ENCODE measurements at regions of chr11 and their contacts with region 1.

Region 1: GRCh38 chr11:102341844-102342318 is 5.1 kb upstream of the BIRC2 start:
- DNase-seq: peak; percentile 64 to 78 (median 70)
- H3K4me3 ChIP-seq: no peak overlapping the region
- H3K4me3 Mint-ChIP-seq: no peak overlapping the region
- H3K27ac ChIP-seq: peak overlapping the region; percentile 1
- H3K27ac Mint-ChIP-seq: peak overlapping the region; percentile 53 to 93 (median 77)
- H3K4me1 ChIP-seq: peaks cover 14% of the 10 kb centered on the region
- H3K4me1 Mint-ChIP-seq: peaks cover 19 to 24% (median 23%) of the 10 kb centered on the region in 4 donors
- H3K27me3 ChIP-seq: no peaks in the 10 kb centered on the region
- H3K27me3 Mint-ChIP-seq: peaks cover 0 to 1% of the 10 kb centered on the region in 2 donors

Region 2: GRCh38 chr11:102109896-102110760 is 231.8 kb before region 1 on chr11 and contains the start of gene YAP1:
- CTCF ChIA-PET with region 1: no interaction called
- POLR2A ChIA-PET with region 1: no interaction called
- intact Hi-C with region 1: no loop called
- DNase-seq: peak; percentile 58 to 69 (median 61)
- H3K4me3 ChIP-seq: peak within 1 kb of the TSS in 1 of 2 donors; percentile 55
- H3K4me3 Mint-ChIP-seq: peak within 1 kb of the TSS; percentile 92 to 97 (median 94)
- H3K27ac ChIP-seq: no peak within 1 kb of the TSS
- H3K27ac Mint-ChIP-seq: peak within 1 kb of the TSS in 6 of 7 donors; percentile 23 to 82 (median 75)
- H3K4me1 ChIP-seq: peaks cover 12% of the 10 kb centered on the region
- H3K4me1 Mint-ChIP-seq: peaks cover 5 to 12% (median 8%) of the 10 kb centered on the region in 4 donors
- H3K27me3 ChIP-seq: peaks cover 11% of the 10 kb centered on the region
- H3K27me3 Mint-ChIP-seq: peaks cover 24 to 30% of the 10 kb centered on the region in 2 donors
- total RNA-seq, gene YAP1: 0.44 to 0.75 TPM

Region 3: DNA sequence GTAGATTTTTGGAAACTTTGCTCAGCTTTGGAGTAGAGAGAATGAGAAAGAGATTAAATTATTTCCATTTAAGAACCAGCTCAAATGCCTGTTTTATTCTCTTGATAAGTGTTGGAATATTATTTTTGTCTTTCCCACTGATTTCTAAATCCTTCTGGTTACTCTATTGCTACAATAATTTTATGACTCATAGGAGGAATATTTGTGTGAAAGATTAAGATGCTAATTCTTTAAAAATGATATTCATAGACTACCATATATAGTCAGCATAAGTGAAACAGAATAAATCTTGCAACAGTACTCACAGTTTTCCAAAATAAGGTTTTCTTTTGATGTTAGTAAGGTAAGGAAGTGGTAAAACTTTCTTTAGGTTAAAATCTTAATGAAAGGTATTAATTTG is 170.8 kb before region 1 on chr11:
- CTCF ChIA-PET with region 1: no interaction called
- POLR2A ChIA-PET with region 1: no interaction called
- intact Hi-C with region 1: no loop called
- DNase-seq: no peak
- H3K4me3 ChIP-seq: no peak overlapping the region
- H3K4me3 Mint-ChIP-seq: no peak overlapping the region
- H3K27ac ChIP-seq: no peak overlapping the region
- H3K27ac Mint-ChIP-seq: no peak overlapping the region
- H3K4me1 ChIP-seq: no peaks in the 10 kb centered on the region
- H3K4me1 Mint-ChIP-seq: no peaks in the 10 kb centered on the region
- H3K27me3 ChIP-seq: no peaks in the 10 kb centered on the region
- H3K27me3 Mint-ChIP-seq: peaks cover 11 to 22% of the 10 kb centered on the region in 2 donors

Region 4: GRCh38 chr11:102293873-102294601 is 47.8 kb before region 1 on chr11:
- CTCF ChIA-PET with region 1: interaction called, 89 read pairs
- POLR2A ChIA-PET with region 1: interaction called, 16 read pairs
- intact Hi-C with region 1: loop called (anchors 1 kb)
- DNase-seq: peak; percentile 57 to 74 (median 71)
- H3K4me3 ChIP-seq: peak overlapping the region in 1 of 2 donors; percentile 52
- H3K4me3 Mint-ChIP-seq: peak overlapping the region; percentile 86 to 99 (median 96)
- H3K27ac ChIP-seq: peak overlapping the region; percentile 62
- H3K27ac Mint-ChIP-seq: peak overlapping the region; percentile 78 to 99 (median 97)
- H3K4me1 ChIP-seq: peaks cover 34% of the 10 kb centered on the region
- H3K4me1 Mint-ChIP-seq: peaks cover 20 to 58% (median 36%) of the 10 kb centered on the region in 4 donors
- H3K27me3 ChIP-seq: no peaks in the 10 kb centered on the region
- H3K27me3 Mint-ChIP-seq: no peaks in the 10 kb centered on the region

Region 5: DNA sequence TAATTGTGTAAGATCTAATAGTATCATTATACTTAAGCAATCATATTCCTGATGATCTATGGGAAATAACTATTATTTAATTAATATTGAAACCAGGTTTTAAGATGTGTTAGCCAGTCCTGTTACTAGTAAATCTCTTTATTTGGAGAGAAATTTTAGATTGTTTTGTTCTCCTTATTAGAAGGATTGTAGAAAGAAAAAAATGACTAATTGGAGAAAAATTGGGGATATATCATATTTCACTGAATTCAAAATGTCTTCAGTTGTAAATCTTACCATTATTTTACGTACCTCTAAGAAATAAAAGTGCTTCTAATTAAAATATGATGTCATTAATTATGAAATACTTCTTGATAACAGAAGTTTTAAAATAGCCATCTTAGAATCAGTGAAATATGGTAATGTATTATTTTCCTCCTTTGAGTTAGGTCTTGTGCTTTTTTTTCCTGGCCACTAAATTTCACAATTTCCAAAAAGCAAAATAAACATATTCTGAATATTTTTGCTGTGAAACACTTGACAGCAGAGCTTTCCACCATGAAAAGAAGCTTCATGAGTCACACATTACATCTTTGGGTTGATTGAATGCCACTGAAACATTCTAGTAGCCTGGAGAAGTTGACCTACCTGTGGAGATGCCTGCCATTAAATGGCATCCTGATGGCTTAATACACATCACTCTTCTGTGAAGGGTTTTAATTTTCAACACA is 18.2 kb before region 1 on chr11:
- CTCF ChIA-PET with region 1: interaction called, 18 read pairs
- POLR2A ChIA-PET with region 1: interaction called, 8 read pairs
- intact Hi-C with region 1: no loop called
- DNase-seq: no peak
- H3K4me3 ChIP-seq: peak overlapping the region in 1 of 2 donors; percentile 2
- H3K4me3 Mint-ChIP-seq: peak overlapping the region in 3 of 8 donors; percentile 9 to 59 (median 29)
- H3K27ac ChIP-seq: no peak overlapping the region
- H3K27ac Mint-ChIP-seq: peak overlapping the region in 5 of 7 donors; percentile 30 to 81 (median 57)
- H3K4me1 ChIP-seq: peaks cover 75% of the 10 kb centered on the region
- H3K4me1 Mint-ChIP-seq: peaks cover 37 to 72% (median 49%) of the 10 kb centered on the region in 4 donors
- H3K27me3 ChIP-seq: no peaks in the 10 kb centered on the region
- H3K27me3 Mint-ChIP-seq: no peaks in the 10 kb centered on the region

Region 6: DNA sequence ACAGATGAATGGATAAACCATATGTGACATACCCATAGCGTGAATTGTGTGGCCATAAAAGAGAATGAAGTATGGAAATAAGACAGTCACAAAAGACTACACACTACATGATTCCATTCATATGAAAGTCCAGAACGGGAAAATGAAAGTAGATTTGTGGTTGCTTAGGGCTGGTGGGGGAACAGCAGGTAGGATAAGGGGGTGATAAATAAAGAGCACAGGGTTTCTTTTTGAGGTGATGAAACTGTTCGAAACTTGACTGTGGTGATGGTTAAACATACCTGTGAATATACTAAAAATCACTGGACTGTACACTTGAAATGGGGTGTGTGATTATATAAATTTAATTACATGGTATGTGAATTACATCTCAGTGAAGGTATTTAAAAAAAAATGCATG is 93.8 kb after region 1 on chr11:
- CTCF ChIA-PET with region 1: no interaction called
- POLR2A ChIA-PET with region 1: no interaction called
- intact Hi-C with region 1: no loop called
- DNase-seq: no peak
- H3K4me3 ChIP-seq: no peak overlapping the region
- H3K4me3 Mint-ChIP-seq: peak overlapping the region in 2 of 8 donors; percentile 46 to 53
- H3K27ac ChIP-seq: no peak overlapping the region
- H3K27ac Mint-ChIP-seq: peak overlapping the region in 5 of 7 donors; percentile 32 to 72 (median 67)
- H3K4me1 ChIP-seq: peaks cover 63% of the 10 kb centered on the region
- H3K4me1 Mint-ChIP-seq: peaks cover 54 to 83% (median 65%) of the 10 kb centered on the region in 4 donors
- H3K27me3 ChIP-seq: no peaks in the 10 kb centered on the region
- H3K27me3 Mint-ChIP-seq: no peaks in the 10 kb centered on the region

Region 7: GRCh38 chr11:102476812-102477211 is 134.9 kb after region 1 on chr11:
- CTCF ChIA-PET with region 1: interaction called, 16 read pairs
- POLR2A ChIA-PET with region 1: interaction called, 6 read pairs
- intact Hi-C with region 1: no loop called
- DNase-seq: peak; percentile 23 to 45 (median 24)
- H3K4me3 ChIP-seq: no peak overlapping the region
- H3K4me3 Mint-ChIP-seq: peak overlapping the region in 7 of 8 donors; percentile 44 to 72 (median 61)
- H3K27ac ChIP-seq: no peak overlapping the region
- H3K27ac Mint-ChIP-seq: peak overlapping the region; percentile 33 to 96 (median 91)
- H3K4me1 ChIP-seq: peaks cover 47% of the 10 kb centered on the region
- H3K4me1 Mint-ChIP-seq: peaks cover 29 to 62% (median 44%) of the 10 kb centered on the region in 4 donors
- H3K27me3 ChIP-seq: no peaks in the 10 kb centered on the region
- H3K27me3 Mint-ChIP-seq: no peaks in the 10 kb centered on the region

Region 8: DNA sequence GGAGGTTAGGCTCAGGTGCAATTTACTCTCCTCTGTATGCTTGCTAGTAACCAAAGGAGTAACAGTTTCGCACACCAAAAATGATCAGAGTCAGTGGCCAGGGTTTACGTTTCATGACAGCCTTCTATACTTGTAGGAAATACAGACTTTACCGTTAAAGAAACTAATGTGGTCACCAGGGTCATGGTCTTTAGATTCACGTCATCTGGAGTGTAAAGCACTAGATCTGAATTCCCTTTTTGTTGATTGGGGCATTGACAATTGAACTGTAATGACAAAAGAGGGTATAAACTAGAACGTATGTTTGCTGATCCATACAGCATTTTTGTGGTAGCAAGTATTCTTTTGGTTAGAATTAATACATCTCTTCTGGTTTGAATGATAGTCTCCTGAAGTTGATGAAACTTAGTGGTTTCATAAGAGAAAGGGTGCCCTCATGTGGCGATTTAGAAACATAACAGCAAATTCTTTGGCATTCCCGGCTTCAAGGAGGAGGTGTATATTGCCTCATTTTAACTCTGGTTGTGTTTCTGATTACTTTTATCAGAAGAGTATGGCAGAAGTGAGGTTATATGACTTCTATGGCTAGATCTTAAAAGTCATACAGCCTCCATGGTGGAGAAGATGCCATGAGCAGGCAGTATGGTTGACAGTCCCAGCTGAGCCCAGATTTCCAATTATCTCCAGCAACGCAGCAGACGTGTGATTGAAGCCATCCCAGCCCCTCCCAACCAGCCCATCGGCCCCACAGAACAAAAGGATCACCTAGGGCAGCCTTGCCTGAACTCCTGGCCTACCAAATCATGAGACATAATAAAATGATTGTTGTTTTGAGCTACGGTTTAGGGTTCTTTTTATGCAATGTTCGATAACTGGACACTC is 153.5 kb after region 1 on chr11:
- CTCF ChIA-PET with region 1: interaction called, 38 read pairs
- POLR2A ChIA-PET with region 1: interaction called, 6 read pairs
- intact Hi-C with region 1: loop called (anchors 1 kb)
- DNase-seq: peak; percentile 59 to 75 (median 73)
- H3K4me3 ChIP-seq: no peak overlapping the region
- H3K4me3 Mint-ChIP-seq: peak overlapping the region in 1 of 8 donors; percentile 6
- H3K27ac ChIP-seq: no peak overlapping the region
- H3K27ac Mint-ChIP-seq: no peak overlapping the region
- H3K4me1 ChIP-seq: peaks cover 4% of the 10 kb centered on the region
- H3K4me1 Mint-ChIP-seq: peaks cover 0 to 7% (median 5%) of the 10 kb centered on the region in 4 donors
- H3K27me3 ChIP-seq: peaks cover 4% of the 10 kb centered on the region
- H3K27me3 Mint-ChIP-seq: peaks cover 5 to 7% of the 10 kb centered on the region in 2 donors

Region 9: DNA sequence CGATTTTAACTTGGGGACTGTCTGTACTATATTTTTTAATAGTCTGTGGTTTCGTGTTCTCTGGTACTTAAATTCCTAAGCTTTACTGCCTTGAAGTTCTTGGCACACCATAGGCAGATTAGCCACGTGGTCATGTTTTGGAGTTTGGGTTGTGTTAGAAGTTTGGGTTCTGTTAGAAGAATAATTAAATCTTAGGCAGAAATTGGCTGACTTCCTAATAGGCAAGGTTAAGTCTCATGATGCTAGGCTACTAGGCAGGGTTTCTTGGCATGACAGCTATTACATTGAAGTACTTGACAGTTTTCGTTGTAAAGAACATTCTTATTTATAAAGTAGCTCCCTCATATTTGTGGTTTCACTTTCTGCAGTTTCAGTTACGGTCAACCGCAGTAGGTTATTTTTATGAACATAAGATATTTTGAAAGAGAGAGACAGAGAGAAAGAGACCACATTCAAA is 218.7 kb after region 1 on chr11:
- CTCF ChIA-PET with region 1: no interaction called
- POLR2A ChIA-PET with region 1: no interaction called
- intact Hi-C with region 1: no loop called
- DNase-seq: peak in 4 of 5 donors; percentile 21 to 34 (median 28)
- H3K4me3 ChIP-seq: no peak overlapping the region
- H3K4me3 Mint-ChIP-seq: peak overlapping the region; percentile 73 to 87 (median 80)
- H3K27ac ChIP-seq: peak overlapping the region; percentile 11
- H3K27ac Mint-ChIP-seq: peak overlapping the region; percentile 72 to 97 (median 86)
- H3K4me1 ChIP-seq: peaks cover 34% of the 10 kb centered on the region
- H3K4me1 Mint-ChIP-seq: peaks cover 29 to 48% (median 39%) of the 10 kb centered on the region in 4 donors
- H3K27me3 ChIP-seq: no peaks in the 10 kb centered on the region
- H3K27me3 Mint-ChIP-seq: no peaks in the 10 kb centered on the region

Region 10: GRCh38 chr11:102666331-102666957 is 324.6 kb after region 1 on chr11:
- CTCF ChIA-PET with region 1: interaction called, 41 read pairs
- POLR2A ChIA-PET with region 1: no interaction called
- intact Hi-C with region 1: loop called (anchors 1 kb)
- DNase-seq: peak in 4 of 5 donors; percentile 30 to 37 (median 33)
- H3K4me3 ChIP-seq: no peak overlapping the region
- H3K4me3 Mint-ChIP-seq: no peak overlapping the region
- H3K27ac ChIP-seq: no peak overlapping the region
- H3K27ac Mint-ChIP-seq: no peak overlapping the region
- H3K4me1 ChIP-seq: no peaks in the 10 kb centered on the region
- H3K4me1 Mint-ChIP-seq: no peaks in the 10 kb centered on the region
- H3K27me3 ChIP-seq: no peaks in the 10 kb centered on the region
- H3K27me3 Mint-ChIP-seq: peaks cover 1 to 12% of the 10 kb centered on the region in 2 donors

Measured in CD4-positive, alpha-beta memory T cell (primary cell).